GM10248 (cell line): ENCODE measurements at regions of chr9 and their contacts with region 1.

Region 1: DNA sequence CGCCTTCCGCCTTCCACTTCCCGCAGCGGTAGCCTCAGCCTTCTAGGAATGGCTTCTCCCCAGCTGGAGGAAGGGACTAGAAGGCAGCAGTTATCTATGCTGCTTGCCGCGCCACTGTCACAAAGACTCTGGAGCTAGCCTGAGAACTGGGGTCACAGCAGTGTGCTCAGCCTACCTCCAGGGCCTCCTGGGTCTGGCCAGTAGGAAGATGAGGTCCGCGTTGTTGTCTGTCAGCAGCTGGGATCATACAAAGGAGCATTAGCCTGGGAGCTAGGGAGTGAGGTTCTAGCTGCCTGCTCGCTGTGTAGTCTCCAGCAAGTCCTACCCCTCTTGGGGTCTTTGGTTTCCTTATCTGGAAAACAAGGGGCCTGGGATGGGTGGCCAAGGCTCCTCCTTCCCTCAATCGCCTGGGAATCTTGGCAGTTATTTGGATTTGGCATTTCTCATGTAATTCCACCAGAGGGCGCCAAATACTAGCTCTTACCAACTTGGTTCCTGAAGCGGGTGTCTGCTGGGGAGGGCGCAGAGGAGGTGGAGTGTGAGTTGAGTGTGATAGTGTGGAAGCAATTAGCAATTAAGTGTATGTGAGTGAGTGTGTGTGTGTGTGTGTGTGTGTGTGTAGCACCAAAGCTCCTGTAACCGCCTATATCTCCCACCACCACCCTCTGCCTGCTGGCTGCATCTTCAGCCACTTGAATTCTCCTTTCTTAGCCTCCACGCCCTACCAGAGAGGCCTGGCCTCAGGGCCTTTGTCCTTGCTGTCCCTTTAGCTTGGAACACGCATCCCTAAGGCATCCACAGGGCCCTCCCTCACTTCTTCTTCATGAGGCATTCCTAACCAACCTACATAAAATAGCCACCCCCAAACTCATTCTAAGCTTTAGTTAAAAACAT is 97.1 kb downstream of the ENTREP1 start:
- DNase-seq: peak; percentile 76
- CTCF ChIP-seq: peak; percentile 84

Region 2: DNA sequence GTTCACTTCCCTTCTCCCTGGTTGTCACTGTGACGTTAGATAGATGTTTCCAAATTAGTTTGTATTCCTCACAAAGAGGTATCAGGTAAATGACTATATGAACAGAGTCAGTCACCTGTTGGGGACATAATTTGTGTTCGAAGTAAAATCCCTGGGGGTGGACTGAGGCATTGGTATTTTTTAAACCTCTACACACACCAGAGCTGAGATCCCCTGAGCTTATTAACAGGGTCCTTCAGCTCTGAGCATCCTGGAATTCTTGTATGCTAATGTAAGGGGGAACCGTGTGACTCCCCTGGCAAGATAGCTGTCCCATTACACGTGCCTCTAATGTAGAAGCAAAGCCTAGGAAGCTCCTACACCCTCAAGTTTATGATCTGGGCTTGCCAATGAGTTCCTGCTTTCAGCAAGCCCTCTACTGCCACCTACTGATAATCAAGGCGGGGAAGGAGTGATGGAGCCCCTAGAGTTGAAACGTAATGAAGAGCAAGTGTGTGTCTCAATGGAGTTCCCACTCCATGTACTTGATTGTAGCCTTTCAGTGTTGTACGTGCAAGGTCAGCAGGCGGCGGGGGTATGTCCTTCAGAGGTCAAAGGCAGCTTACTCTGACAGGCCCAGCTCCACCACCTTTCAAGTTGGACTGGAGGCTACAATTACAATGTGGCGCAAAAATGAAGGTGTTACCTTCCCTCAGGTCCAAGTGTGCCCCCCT is 422.6 kb before region 1 on chr9:
- CTCF ChIA-PET with region 1: no interaction called
- POLR2A ChIA-PET with region 1: no interaction called
- DNase-seq: peak; percentile 76
- CTCF ChIP-seq: peak; percentile 73

Region 3: DNA sequence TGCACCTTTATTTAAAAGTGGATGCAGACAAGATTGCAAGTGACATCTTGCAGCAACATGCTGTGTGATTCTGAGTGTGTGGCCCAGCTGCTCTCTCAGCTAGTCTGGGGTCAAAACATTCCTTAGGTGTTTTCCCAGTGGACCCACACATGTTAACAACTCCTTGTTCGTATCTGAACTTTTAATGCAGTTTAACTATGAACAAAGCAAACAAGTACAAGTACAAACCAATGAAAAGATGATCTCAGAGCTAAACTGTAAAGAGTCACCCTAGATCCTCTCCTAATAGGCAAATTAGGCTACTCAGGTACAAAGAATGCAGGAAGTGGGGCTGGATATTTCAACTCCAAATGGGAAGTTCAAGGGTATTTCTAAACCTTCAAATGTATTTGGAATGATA is 11.2 kb after region 1 on chr9:
- CTCF ChIA-PET with region 1: interaction called, 14 read pairs
- POLR2A ChIA-PET with region 1: no interaction called
- DNase-seq: no peak
- CTCF ChIP-seq: no peak

Region 4: GRCh38 chr9:69441840-69442239 is 19.7 kb after region 1 on chr9:
- CTCF ChIA-PET with region 1: interaction called, 13 read pairs
- POLR2A ChIA-PET with region 1: no interaction called
- DNase-seq: no peak
- CTCF ChIP-seq: no peak

Region 5: GRCh38 chr9:69502671-69503301 is 80.6 kb after region 1 on chr9:
- CTCF ChIA-PET with region 1: no interaction called
- POLR2A ChIA-PET with region 1: no interaction called
- DNase-seq: no peak
- CTCF ChIP-seq: no peak

Region 6: GRCh38 chr9:69549310-69550202 is 127.4 kb after region 1 on chr9:
- CTCF ChIA-PET with region 1: interaction called, 130 read pairs
- POLR2A ChIA-PET with region 1: no interaction called
- DNase-seq: peak; percentile 45
- CTCF ChIP-seq: peak; percentile 67

Region 7: GRCh38 chr9:69649566-69650250 is 227.6 kb after region 1 on chr9:
- CTCF ChIA-PET with region 1: no interaction called
- POLR2A ChIA-PET with region 1: no interaction called
- DNase-seq: no peak
- CTCF ChIP-seq: no peak

Region 8: DNA sequence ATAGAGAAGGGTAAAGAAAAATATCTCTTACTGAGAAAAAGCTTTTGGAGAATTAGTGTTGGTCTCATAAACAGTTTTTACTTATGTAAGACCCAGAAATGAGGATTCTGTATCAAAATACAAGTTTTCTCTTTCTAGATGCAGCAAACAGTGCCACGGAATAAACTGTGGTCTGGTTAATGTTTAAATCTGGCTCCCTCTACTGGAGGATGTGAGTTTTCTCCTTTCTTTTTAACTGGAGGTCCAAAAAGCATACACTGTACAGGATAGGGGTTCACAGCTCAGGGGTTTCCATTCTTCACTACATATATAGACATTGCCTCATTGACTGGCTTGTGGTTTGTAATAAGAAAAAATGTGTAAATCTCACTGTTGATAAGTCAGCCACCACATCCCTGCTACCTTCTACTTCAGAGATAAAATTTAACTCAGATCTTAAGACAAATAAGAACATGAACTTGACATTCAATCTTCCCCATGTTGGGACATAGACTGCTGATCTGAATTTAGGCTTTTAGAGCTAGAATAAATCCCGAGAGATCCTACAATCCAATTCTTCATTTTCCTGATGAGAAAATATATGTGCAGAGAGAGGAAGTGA is 497.4 kb after region 1 on chr9:
- CTCF ChIA-PET with region 1: interaction called, 39 read pairs
- POLR2A ChIA-PET with region 1: no interaction called
- DNase-seq: peak; percentile 59
- CTCF ChIP-seq: peak; percentile 69

Region 9: GRCh38 chr9:69932901-69933300 is 510.7 kb after region 1 on chr9:
- CTCF ChIA-PET with region 1: interaction called, 10 read pairs
- POLR2A ChIA-PET with region 1: no interaction called
- DNase-seq: no peak
- CTCF ChIP-seq: no peak

Region 10: DNA sequence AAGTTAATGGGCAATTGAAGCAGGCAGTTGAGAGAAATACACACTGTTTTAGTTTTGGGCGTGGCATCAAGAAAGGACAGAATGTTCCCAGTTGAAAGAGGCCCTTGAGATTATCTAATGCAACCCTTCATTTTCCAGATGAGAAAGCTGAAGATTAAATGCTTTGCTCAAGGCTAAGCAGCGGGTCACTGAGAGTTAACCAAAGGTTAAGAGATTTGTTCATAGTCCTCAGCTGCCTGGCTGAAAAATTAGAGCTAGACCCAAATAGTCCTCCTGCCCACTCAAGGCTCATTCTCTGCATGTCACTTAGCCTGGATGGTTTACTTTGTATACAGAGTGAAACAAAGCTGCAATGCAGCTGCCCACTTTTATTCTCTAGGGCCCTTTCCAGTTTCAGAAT is 574.8 kb after region 1 on chr9:
- CTCF ChIA-PET with region 1: no interaction called
- POLR2A ChIA-PET with region 1: no interaction called
- DNase-seq: no peak
- CTCF ChIP-seq: no peak